WTC11 (cell line): ENCODE measurements at regions of chr1 and their contacts with region 1.

Region 1: GRCh38 chr1:8314346-8315280 is 3.3 kb upstream of the SLC45A1 start:
- DNase-seq: peak; percentile 86
- ATAC-seq: peak; percentile 80
- H3K4me3 Mint-ChIP-seq: no peak overlapping the region
- H3K27ac Mint-ChIP-seq: peak overlapping the region; percentile 21; the same call in 1 of the 2 replicates
- H3K4me1 Mint-ChIP-seq: peaks cover 43% of the 10 kb centered on the region
- H3K27me3 Mint-ChIP-seq: peaks cover 31% of the 10 kb centered on the region
- CTCF ChIP-seq: peak; percentile 84

Region 2: GRCh38 chr1:7991504-7992440 is 322.8 kb before region 1 on chr1:
- CTCF ChIA-PET with region 1: interaction called, 24 read pairs
- POLR2A ChIA-PET with region 1: no interaction called
- DNase-seq: peak; percentile 87
- ATAC-seq: peak; percentile 99
- H3K4me3 Mint-ChIP-seq: no peak overlapping the region
- H3K27ac Mint-ChIP-seq: peak overlapping the region; percentile 97
- H3K4me1 Mint-ChIP-seq: peaks cover 31% of the 10 kb centered on the region
- H3K27me3 Mint-ChIP-seq: no peaks in the 10 kb centered on the region
- CTCF ChIP-seq: no peak

Region 3: DNA sequence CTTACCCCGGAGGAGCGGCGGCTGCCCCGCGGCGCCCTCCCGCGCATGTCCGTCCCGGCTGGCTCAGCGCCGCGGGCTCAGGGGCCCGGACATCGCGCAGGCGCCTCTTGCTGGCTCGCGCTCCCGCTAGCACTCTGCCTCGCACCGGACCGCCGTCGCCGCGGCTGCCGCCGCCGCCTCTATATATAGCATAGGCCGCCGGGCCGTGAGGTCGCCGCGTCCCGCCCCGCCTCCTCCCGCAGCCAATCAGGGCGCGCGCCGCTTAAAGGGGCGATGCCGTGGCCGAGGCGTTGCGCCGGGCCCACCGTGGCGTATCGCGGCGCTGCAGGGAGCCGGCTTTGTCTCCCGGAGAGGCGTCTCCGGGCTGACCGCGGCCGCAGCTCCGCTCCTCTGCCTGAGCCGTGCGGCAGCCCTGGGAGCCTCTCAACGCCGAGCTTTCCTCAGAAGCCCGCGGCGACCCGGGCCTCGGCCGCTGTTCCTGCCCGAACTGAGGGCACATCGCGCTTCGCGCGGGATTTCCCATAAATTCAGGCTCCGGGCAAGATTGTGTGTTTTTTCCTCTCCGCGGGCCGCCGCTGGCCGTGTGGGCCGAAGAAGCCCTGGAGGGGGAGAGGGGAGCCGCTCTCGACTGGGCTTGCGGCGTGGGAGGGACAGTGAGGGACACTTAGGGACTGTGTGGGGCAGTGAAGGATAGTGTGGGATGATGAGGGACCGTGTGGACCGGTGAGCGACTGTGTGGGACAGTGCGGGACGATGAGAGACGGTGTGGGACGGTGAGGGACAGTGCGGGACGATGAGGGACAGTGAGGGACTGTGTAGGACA is 288.2 kb before region 1 on chr1 and contains the start of gene ERRFI1:
- CTCF ChIA-PET with region 1: interaction called, 70 read pairs
- POLR2A ChIA-PET with region 1: interaction called, 3 read pairs
- DNase-seq: peak; percentile 94
- ATAC-seq: peak; percentile 84
- H3K4me3 Mint-ChIP-seq: peak within 1 kb of the TSS; percentile 88
- H3K27ac Mint-ChIP-seq: peak within 1 kb of the TSS; percentile 70
- H3K4me1 Mint-ChIP-seq: peaks cover 60% of the 10 kb centered on the region
- H3K27me3 Mint-ChIP-seq: peaks cover 7% of the 10 kb centered on the region
- CTCF ChIP-seq: no peak
- total RNA-seq, gene ERRFI1: 34.5 to 44.6 TPM (median 35.8 TPM) in 3 replicates

Region 4: DNA sequence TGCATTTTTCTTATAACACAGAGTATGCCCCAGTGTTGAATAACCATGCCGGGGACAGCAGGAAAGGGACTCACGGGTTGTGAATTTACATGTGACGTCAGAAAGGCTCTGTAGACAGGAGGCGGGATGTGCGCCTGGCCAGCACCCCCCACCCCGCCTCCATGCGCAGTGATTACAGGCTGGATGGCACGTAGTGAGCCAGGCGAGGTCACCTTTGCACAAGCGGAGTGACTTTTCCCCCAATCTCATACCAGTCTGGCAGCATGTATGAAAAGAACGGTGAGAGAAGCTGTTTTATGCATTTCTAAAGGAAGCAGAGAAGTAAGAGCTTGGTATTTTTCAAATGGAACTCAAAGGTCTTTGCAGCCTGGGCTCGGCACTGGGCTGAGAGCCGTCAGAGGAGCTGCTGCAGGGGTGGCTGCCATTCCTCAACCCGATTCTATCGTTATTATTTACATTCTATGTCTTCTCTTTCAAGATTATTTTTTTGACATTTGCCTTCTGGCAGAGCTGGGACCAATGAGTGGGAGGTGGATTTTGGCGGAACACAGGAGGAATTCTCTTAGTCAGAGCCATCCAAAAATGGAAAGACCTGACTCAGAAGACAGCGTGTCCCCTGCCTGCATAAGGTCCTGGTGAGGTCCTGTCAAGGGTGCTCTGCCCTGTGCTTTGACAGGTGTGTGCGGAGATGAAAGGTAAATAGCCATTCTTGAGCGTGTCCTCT is 112.3 kb before region 1 on chr1:
- CTCF ChIA-PET with region 1: interaction called, 13 read pairs
- POLR2A ChIA-PET with region 1: no interaction called
- DNase-seq: no peak
- ATAC-seq: peak; percentile 40
- H3K4me3 Mint-ChIP-seq: no peak overlapping the region
- H3K27ac Mint-ChIP-seq: no peak overlapping the region; the same call in 1 of the 2 replicates
- H3K4me1 Mint-ChIP-seq: peaks cover 31% of the 10 kb centered on the region
- H3K27me3 Mint-ChIP-seq: no peaks in the 10 kb centered on the region; the same call in 1 of the 2 replicates
- CTCF ChIP-seq: no peak

Region 5: DNA sequence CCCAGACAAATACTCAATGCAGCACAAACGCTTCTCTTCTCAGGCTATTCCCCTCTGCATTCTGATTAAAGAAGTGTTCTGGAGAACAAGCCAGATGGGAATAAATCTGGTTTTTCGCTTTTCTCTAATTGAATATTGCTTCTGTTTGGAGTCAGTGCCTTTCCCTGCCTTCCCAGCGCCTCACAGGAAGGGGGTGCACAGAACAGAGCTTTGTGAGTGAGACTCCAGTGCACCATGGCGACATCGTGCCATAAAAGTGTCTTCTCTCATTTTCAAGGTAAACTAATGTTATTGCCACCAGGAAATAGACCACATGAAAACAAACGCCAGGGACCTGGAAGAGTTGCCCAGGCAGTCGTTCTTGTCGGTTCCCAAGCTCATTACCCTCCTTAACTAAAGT is 40.3 kb before region 1 on chr1:
- CTCF ChIA-PET with region 1: interaction called, 10 read pairs
- POLR2A ChIA-PET with region 1: no interaction called
- DNase-seq: no peak
- ATAC-seq: no peak
- H3K4me3 Mint-ChIP-seq: no peak overlapping the region
- H3K27ac Mint-ChIP-seq: peak overlapping the region; percentile 54; the same call in 1 of the 2 replicates
- H3K4me1 Mint-ChIP-seq: peaks cover 14% of the 10 kb centered on the region
- H3K27me3 Mint-ChIP-seq: no peaks in the 10 kb centered on the region; the same call in 1 of the 2 replicates
- CTCF ChIP-seq: no peak

Region 6: DNA sequence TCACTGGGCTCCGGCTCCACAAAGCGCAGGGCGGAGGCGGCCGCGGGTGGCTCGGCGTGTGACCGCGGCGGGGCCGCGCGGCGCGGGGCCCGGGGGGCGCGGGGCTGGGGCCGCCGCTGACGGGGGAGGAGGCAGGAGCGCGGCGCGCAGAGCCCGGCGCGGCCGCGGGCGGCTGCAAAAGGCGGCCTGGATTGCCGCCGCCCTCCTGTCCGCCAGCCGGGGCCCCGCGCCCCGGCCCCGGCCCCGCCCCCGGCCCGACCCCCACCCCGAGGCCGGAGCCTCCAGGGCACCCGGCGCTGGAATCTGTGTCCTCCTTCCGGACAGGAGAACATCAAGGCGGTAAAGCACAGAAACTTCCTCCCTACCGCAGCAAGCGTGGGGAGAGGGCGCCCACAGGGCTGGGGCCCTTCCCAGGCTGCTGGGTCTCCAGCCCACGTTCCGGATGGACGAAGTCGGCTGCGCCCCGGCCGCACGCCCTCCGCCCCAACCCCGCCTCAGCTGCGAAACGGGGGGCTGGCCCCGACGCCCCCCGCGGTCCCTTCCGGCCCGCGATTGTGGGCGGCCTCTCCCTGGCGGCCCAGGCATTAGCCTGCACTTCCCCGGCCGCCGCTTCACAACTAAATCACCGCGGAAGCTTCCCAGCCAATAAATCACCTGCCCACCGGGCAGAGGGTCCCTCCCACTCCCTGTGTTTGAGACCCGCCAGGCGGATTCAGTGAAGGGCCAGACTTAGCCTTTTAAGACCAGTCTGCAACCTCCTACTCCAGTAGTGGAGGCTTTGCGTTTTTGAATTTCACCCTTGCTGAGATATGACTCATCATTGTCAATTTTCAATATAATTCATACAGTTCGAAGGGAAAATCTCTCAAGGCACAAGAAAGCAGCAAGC is 109.3 kb after region 1 on chr1:
- CTCF ChIA-PET with region 1: no interaction called
- POLR2A ChIA-PET with region 1: no interaction called
- DNase-seq: peak; percentile 75
- ATAC-seq: peak; percentile 76
- H3K4me3 Mint-ChIP-seq: peak overlapping the region; percentile 66
- H3K27ac Mint-ChIP-seq: peak overlapping the region; percentile 96
- H3K4me1 Mint-ChIP-seq: peaks cover 25% of the 10 kb centered on the region
- H3K27me3 Mint-ChIP-seq: no peaks in the 10 kb centered on the region
- CTCF ChIP-seq: no peak